ENCODE measurements at regions of chr20 and their contacts with region 1.

Region 1: GRCh38 chr20:13128173-13128572 is 92.9 kb upstream of the ISM1 start:
- DNase-seq: no peak
- H3K4me3 ChIP-seq: no peak overlapping the region
- H3K27ac ChIP-seq: no peak overlapping the region
- H3K4me1 ChIP-seq: no peaks in the 10 kb centered on the region
- H3K27me3 ChIP-seq: no peaks in the 10 kb centered on the region
- CTCF ChIP-seq: no peak
- POLR2A ChIP-seq: no peak

Region 2: DNA sequence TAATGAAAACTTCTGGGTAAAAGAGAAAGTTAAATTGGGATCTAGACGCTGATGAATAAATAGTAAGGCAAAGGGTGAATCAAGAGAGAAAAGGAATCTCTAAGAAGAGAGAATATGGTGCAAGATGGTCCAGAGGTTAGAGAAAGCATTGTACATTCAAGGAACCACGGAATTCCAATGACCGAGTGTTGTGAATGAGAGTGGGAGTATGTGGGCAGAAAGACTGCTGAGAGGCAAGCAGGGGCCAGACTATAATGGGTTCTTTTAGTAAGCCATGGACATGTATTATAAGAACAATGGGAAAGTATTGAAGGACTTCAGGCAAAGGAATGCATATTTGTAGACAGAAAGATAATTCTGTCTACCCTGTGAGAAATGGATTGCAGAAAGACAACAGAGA is 74.2 kb before region 1 on chr20:
- intact Hi-C with region 1: no loop called
- DNase-seq: no peak
- H3K4me3 ChIP-seq: no peak overlapping the region
- H3K27ac ChIP-seq: no peak overlapping the region
- H3K4me1 ChIP-seq: no peaks in the 10 kb centered on the region
- H3K27me3 ChIP-seq: no peaks in the 10 kb centered on the region
- CTCF ChIP-seq: no peak
- POLR2A ChIP-seq: no peak

Region 3: DNA sequence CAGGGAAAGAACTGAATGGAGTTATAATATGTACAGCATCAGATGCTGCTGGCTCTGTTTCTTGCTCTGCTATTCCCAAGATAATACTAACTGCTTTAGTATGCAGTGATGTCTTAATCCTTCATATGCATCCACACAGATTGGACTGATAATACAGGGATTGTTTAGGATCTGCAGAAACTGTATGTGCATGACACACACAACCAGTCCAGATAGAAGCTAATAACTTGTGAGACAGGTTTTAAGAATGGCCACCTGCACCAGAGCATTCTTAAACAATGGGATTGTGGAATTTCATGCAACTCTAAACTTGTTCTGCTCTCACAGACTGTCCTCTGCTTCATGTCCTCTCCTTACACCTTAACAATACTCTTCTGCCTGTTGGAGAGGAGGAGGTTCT is 28.5 kb before region 1 on chr20:
- intact Hi-C with region 1: loop called (anchors 2 kb)
- DNase-seq: no peak
- H3K4me3 ChIP-seq: no peak overlapping the region
- H3K27ac ChIP-seq: no peak overlapping the region
- H3K4me1 ChIP-seq: peaks cover 3% of the 10 kb centered on the region
- H3K27me3 ChIP-seq: no peaks in the 10 kb centered on the region
- CTCF ChIP-seq: no peak
- POLR2A ChIP-seq: no peak

Measured in testis (tissue), 5 donors.